Sciatic nerve (tissue), 2 donors: ENCODE measurements at regions of chr4 and their contacts with region 1.

Region 1: GRCh38 chr4:109879559-109880314 is 31.8 kb downstream of the LRIT3 start:
- DNase-seq: no peak
- ATAC-seq: no peak

Region 2: GRCh38 chr4:109910256-109910655 is 30.5 kb after region 1 on chr4:
- intact Hi-C with region 1: loop called (anchors 1 kb)
- DNase-seq: no peak
- ATAC-seq: no peak

Region 3: DNA sequence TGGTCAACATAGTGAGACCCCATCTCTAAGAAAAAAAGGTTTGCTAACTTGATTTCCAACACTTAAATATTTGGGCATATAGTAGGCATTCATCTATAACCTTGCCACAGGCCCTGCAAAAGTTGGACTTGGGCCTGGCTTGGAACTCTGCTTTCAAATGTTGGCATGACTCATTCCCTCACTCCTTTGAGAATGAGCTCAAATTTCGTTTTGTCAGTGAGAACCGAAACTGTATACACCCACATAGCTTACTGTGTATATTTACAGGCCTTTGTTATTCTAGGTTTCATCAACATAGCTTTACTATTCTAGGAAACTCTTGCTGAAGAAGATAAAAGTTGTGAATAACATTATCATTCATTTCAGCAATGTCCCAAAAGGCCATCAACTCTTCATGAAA is 407.4 kb after region 1 on chr4:
- intact Hi-C with region 1: no loop called
- DNase-seq: no peak
- ATAC-seq: no peak

Region 4: GRCh38 chr4:110400086-110400485 is 520.3 kb after region 1 on chr4:
- intact Hi-C with region 1: loop called (anchors 10 kb)
- DNase-seq: no peak
- ATAC-seq: no peak